Aorta (tissue), 5 donors: ENCODE measurements at regions of chr10 and their contacts with region 1.

Region 1: DNA sequence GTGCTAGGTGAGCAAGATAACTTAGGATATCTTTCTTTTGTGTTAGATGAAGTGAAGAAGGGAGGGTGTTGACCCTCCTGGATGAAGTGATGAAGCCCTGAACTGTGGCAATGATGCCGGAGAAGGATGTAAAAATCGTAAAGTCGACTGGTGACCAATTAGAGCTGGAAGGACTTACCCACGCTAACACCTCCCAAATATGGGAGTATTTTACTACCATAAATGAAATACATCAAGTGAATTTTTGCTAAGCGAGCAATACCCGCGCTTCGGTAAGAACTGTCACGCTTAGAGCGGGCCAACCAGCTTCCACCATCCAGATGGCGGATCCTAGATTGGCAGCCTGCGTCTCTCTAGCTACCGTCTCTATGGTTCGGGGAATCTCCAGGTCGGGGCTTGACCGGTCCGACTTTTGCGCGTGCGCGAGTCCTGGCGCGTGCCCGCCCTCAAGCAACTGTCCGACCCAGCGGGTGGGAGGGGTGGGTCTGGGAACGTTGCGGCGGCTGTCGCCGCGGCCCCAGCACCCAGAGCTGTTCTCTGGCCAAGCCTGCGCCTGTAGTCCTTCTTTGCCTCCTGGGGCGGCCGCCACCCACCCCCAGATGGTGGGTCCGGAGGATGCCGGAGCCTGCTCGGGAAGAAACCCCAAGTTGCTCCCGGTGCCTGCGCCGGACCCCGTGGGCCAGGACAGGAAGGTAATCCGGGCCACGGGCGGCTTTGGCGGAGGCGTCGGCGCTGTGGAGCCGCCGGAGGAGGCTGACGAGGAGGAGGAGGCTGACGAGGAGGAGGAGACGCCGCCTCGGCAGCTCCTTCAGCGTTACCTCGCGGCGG is at the start of gene TBC1D12:
- DNase-seq: peak; percentile 97 to 98
- ATAC-seq: peak; percentile 98
- H3K4me3 ChIP-seq: peak within 1 kb of the TSS; percentile 97
- H3K27ac ChIP-seq: peak within 1 kb of the TSS; percentile 82 to 98
- H3K4me1 ChIP-seq: peaks cover 0 to 2% of the 10 kb centered on the region in 2 donors
- H3K27me3 ChIP-seq: no peaks in the 10 kb centered on the region
- total RNA-seq, gene TBC1D12: 10.9 to 20.4 TPM

Region 2: GRCh38 chr10:94439275-94439861 is 37.1 kb after region 1 on chr10:
- intact Hi-C with region 1: loop called in 1 of 2 experiments (anchors 5 kb)
- DNase-seq: peak in 1 of 2 donors; percentile 52
- ATAC-seq: no peak
- H3K4me3 ChIP-seq: no peak overlapping the region
- H3K27ac ChIP-seq: no peak overlapping the region
- H3K4me1 ChIP-seq: peaks cover 0 to 3% of the 10 kb centered on the region in 2 donors
- H3K27me3 ChIP-seq: no peaks in the 10 kb centered on the region

Region 3: GRCh38 chr10:94524711-94525110 is 122.5 kb after region 1 on chr10:
- intact Hi-C with region 1: no loop called
- DNase-seq: no peak
- ATAC-seq: no peak
- H3K4me3 ChIP-seq: no peak overlapping the region
- H3K27ac ChIP-seq: no peak overlapping the region
- H3K4me1 ChIP-seq: no peaks in the 10 kb centered on the region
- H3K27me3 ChIP-seq: no peaks in the 10 kb centered on the region

Region 4: DNA sequence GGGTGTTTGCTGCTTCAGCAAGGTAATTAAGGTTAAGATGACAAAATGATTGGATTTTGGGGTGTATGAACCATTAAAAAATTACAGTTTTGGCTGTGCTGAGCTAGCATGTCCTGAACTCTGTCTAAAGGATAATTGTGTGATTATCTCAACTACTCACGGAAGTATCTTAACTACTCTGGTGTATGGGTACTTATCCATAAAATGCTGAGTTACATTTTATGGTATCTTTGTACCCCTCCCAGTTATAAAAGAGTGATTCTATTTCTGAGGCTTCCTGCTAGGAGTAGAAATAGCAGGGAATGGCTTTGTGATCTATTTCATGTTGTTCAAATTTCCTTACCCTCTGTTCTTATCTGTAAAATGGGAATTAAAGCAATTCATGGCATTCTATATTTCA is 303.9 kb after region 1 on chr10:
- intact Hi-C with region 1: no loop called
- DNase-seq: no peak
- ATAC-seq: no peak
- H3K4me3 ChIP-seq: no peak overlapping the region
- H3K27ac ChIP-seq: no peak overlapping the region
- H3K4me1 ChIP-seq: no peaks in the 10 kb centered on the region
- H3K27me3 ChIP-seq: no peaks in the 10 kb centered on the region